Caco-2 (cell line): ENCODE measurements at regions of chr20 and their contacts with region 1.

Region 1: DNA sequence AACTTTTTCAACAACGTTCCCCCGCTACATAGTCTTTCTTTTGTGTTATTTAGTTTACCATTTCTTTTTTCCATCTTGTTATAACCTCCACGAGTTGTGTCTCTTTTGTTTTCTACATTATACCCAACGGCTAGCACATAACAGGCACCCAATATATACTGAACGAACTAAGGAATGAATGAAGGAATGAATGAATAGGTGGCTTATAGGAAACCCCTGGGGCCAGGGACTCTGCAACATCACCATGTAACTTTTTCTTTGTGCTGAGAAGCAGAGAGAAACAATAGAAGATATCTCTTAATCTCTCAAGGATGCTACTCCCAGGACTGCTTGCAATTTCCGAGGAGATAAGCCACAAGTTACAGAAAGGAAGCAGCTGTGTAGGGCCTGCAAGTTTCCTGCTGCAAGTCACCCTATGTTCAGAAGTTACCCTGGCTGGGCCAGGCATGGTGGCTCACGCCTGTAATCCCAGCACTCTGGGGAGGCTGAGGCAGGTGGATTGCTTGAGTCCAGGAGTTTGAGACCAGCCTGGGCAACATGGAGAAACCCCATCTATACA is 7.4 kb upstream of the MAVS start:
- DNase-seq: no peak
- H3K4me3 ChIP-seq: no peak overlapping the region
- H3K4me3 Mint-ChIP-seq: no peak overlapping the region
- H3K27ac Mint-ChIP-seq: no peak overlapping the region
- H3K4me1 ChIP-seq: peaks cover 6% of the 10 kb centered on the region; the same call in 1 of the 2 replicates
- H3K4me1 Mint-ChIP-seq: no peaks in the 10 kb centered on the region
- H3K27me3 ChIP-seq: no peaks in the 10 kb centered on the region
- H3K27me3 Mint-ChIP-seq: no peaks in the 10 kb centered on the region
- CTCF ChIP-seq: no peak

Region 2: GRCh38 chr20:3595541-3595940 is 243.7 kb before region 1 on chr20:
- CTCF ChIA-PET with region 1: no interaction called
- POLR2A ChIA-PET with region 1: no interaction called
- intact Hi-C with region 1: no loop called
- DNase-seq: no peak
- H3K4me3 ChIP-seq: no peak overlapping the region
- H3K4me3 Mint-ChIP-seq: no peak overlapping the region
- H3K27ac Mint-ChIP-seq: no peak overlapping the region
- H3K4me1 ChIP-seq: no peaks in the 10 kb centered on the region
- H3K4me1 Mint-ChIP-seq: no peaks in the 10 kb centered on the region
- H3K27me3 ChIP-seq: no peaks in the 10 kb centered on the region
- H3K27me3 Mint-ChIP-seq: no peaks in the 10 kb centered on the region
- CTCF ChIP-seq: no peak

Region 3: GRCh38 chr20:3826420-3826819 is 12.8 kb before region 1 on chr20:
- CTCF ChIA-PET with region 1: no interaction called
- POLR2A ChIA-PET with region 1: interaction called, 12 read pairs
- intact Hi-C with region 1: no loop called
- DNase-seq: no peak
- H3K4me3 ChIP-seq: no peak overlapping the region
- H3K4me3 Mint-ChIP-seq: no peak overlapping the region
- H3K27ac Mint-ChIP-seq: no peak overlapping the region
- H3K4me1 ChIP-seq: no peaks in the 10 kb centered on the region
- H3K4me1 Mint-ChIP-seq: peaks cover 7% of the 10 kb centered on the region
- H3K27me3 ChIP-seq: no peaks in the 10 kb centered on the region
- H3K27me3 Mint-ChIP-seq: no peaks in the 10 kb centered on the region
- CTCF ChIP-seq: no peak